ENCODE measurements at regions of chrX and their contacts with region 1.

Region 1: DNA sequence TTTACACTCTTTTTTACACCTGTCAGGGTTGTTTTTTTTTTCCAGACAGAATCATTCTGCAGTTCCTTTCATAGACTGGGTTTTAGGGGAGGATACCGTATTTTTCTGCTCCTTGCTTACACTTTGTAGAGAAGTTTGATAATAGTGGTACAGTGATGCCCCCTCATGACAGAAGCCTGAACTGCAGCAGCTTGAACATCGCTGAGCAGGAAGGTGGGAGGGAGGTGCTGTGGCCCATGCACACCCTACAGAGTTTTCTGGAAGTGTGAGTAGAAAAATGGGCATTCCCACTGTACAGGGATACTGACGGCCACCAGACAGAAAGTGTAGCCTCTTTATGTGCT is 54.5 kb downstream of the RAB40A start:
- DNase-seq: peak; percentile 43
- ATAC-seq: peak; percentile 98
- H3K4me3 ChIP-seq: no peak overlapping the region
- H3K27ac ChIP-seq: no peak overlapping the region
- H3K4me1 ChIP-seq: no peaks in the 10 kb centered on the region
- H3K27me3 ChIP-seq: no peaks in the 10 kb centered on the region
- CTCF ChIP-seq: peak; percentile 71 to 78 (median 73)
- EP300 ChIP-seq: no peak
- POLR2A ChIP-seq: no peak
- RAD21 ChIP-seq: peak; percentile 78

Region 2: DNA sequence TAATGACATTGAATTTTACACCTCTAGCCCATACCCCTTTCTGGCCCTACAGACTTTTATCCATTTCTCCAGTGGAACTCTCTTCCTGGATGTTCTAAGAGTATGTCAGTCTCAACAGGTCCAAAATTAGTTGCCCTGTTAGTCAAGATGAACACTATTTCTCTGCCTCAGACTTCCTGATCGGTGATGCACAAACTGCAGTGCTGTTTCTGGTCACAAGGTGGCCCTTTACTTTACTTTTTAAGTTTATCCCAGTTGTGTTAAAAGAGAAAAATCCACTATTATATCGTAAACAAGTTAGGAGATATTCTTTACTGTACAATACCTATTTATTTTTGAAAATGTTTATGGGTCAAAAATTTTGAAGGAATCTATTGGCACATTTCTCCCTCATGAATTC is 121.6 kb before region 1 on chrX:
- CTCF ChIA-PET with region 1: interaction called, 16 read pairs
- POLR2A ChIA-PET with region 1: no interaction called
- RAD21 ChIA-PET with region 1: interaction called, 8 read pairs
- SMC1A ChIA-PET with region 1: no interaction called
- in situ Hi-C with region 1: loop called (anchors 10 kb)
- intact Hi-C with region 1: loop called (anchors 1 kb)
- DNase-seq: no peak
- ATAC-seq: peak; percentile 76
- H3K4me3 ChIP-seq: no peak overlapping the region
- H3K27ac ChIP-seq: no peak overlapping the region
- H3K4me1 ChIP-seq: no peaks in the 10 kb centered on the region
- H3K27me3 ChIP-seq: no peaks in the 10 kb centered on the region; a peak in 1 of 4 replicates
- CTCF ChIP-seq: peak; percentile 48 to 70 (median 62); a peak in 5 of 6 replicates
- EP300 ChIP-seq: no peak
- POLR2A ChIP-seq: no peak
- RAD21 ChIP-seq: peak; percentile 46; the same call in 1 of the 2 replicates

Region 3: GRCh38 chrX:103437147-103437873 is 27.4 kb before region 1 on chrX:
- CTCF ChIA-PET with region 1: no interaction called
- POLR2A ChIA-PET with region 1: no interaction called
- RAD21 ChIA-PET with region 1: no interaction called
- SMC1A ChIA-PET with region 1: no interaction called
- in situ Hi-C with region 1: no loop called
- intact Hi-C with region 1: no loop called
- DNase-seq: no peak
- ATAC-seq: no peak
- H3K4me3 ChIP-seq: no peak overlapping the region
- H3K27ac ChIP-seq: no peak overlapping the region
- H3K4me1 ChIP-seq: no peaks in the 10 kb centered on the region
- H3K27me3 ChIP-seq: no peaks in the 10 kb centered on the region
- CTCF ChIP-seq: no peak
- EP300 ChIP-seq: no peak
- POLR2A ChIP-seq: no peak
- RAD21 ChIP-seq: no peak

Measured in GM12878 (cell line).